ENCODE measurements at regions of chr20 and their contacts with region 1.

Region 1: DNA sequence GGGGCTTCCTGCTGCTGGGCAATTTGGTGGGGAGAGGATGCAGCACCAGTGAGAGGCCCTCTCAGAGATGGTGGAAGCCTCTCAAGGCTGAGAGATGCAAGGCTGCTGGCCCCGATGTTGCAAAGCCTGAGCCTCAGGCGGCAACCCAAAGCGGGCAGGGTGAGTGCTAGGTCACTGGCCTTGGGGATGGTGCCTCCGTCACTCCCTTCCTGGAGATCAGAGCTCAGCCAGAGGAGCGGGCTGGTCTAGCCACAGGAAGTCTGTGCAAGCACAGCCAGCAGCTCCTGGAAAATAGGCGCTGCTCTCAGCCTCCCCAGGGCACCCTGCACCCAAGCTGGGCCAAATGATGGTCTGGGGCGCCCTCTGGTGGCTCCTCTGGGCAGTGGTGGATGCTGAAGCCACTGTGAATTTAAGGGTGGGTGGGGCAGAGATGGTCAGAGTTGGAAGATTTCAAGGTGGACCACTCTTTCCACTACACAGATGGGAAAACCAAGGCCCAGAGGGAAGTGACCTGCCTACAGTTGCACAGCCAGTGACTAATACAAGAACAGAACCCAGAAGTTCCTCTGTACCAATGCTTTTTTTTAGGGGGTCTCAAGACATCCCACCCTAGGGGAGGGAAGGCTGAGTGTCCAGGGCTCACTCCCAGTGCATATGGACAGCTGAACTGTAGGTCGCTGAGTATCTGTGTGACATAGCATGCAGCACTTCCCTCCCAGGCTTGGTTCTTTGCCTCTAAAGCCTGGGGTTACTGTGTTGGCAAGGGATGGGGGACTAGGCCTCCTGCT is 20.8 kb downstream of the C20orf203 start:
- DNase-seq: peak; percentile 87 to 92 (median 89)
- ATAC-seq: peak; percentile 92
- H3K4me3 ChIP-seq: no peak overlapping the region
- H3K27ac ChIP-seq: no peak overlapping the region
- H3K4me1 ChIP-seq: peaks cover 34 to 41% of the 10 kb centered on the region in 2 experiments
- H3K27me3 ChIP-seq: no peaks in the 10 kb centered on the region
- CTCF ChIP-seq: peak; percentile 97 to 98 (median 97)
- EP300 ChIP-seq: peak; percentile 42; the same call in 1 of the 2 replicates
- POLR2A ChIP-seq: no peak
- RAD21 ChIP-seq: peak; percentile 99

Region 2: DNA sequence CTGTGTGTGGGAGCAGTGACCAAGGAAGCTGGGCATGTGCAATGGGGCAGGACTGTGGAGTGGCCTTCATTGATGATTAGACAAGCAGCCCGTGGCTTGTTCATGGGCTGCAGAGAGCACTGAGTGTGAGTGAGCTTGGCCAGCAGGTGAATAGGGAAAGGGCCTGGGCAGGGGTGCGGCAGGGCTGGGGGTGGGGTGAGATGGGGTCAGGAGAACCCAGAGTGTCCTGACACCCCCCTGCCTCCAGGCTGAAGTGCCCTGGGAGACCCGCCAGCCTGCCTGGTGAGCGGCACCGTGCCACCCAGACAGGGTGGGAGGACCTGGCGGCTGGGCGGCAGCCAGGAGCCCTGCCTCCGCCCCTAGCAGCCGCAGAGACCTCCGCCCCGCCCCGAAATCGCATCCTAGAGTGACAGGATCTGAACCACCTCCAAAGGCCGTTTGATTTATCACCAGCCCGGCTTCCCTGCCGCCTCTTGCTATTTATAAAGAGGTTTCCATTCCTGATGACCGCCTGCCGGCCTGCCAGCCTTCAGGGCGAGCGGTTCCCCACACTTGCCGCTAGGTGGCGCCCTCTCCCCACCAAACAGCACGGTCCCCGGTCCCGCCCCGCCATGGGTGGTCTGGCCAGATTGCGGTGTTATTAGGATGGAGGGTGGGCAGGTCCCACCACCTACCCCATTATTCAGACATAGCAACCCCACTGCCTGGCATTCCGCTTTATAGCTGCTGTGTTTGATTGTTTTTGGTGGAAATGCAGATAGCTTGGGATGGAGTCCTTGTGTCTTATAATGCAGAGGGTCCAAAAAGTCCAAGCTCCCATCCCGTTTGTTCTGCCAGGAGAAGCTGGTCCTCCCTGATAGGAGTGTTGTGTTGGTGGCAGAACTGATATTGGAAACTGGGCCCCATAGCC is 830.3 kb before region 1 on chr20:
- CTCF ChIA-PET with region 1: no interaction called
- POLR2A ChIA-PET with region 1: no interaction called
- in situ Hi-C with region 1: loop called (anchors 25 kb)
- intact Hi-C with region 1: loop called (anchors 10 kb)
- DNase-seq: peak; percentile 79 to 89 (median 86)
- ATAC-seq: peak; percentile 95
- H3K4me3 ChIP-seq: no peak overlapping the region
- H3K27ac ChIP-seq: no peak overlapping the region
- H3K4me1 ChIP-seq: peaks cover 0 to 10% of the 10 kb centered on the region in 2 experiments; a peak in 3 of 5 replicates
- H3K27me3 ChIP-seq: peaks cover 11 to 16% of the 10 kb centered on the region in 2 experiments; a peak in 3 of 5 replicates
- CTCF ChIP-seq: peak; percentile 90 to 95 (median 95)
- EP300 ChIP-seq: no peak
- POLR2A ChIP-seq: no peak
- RAD21 ChIP-seq: peak; percentile 95 to 96

Region 3: DNA sequence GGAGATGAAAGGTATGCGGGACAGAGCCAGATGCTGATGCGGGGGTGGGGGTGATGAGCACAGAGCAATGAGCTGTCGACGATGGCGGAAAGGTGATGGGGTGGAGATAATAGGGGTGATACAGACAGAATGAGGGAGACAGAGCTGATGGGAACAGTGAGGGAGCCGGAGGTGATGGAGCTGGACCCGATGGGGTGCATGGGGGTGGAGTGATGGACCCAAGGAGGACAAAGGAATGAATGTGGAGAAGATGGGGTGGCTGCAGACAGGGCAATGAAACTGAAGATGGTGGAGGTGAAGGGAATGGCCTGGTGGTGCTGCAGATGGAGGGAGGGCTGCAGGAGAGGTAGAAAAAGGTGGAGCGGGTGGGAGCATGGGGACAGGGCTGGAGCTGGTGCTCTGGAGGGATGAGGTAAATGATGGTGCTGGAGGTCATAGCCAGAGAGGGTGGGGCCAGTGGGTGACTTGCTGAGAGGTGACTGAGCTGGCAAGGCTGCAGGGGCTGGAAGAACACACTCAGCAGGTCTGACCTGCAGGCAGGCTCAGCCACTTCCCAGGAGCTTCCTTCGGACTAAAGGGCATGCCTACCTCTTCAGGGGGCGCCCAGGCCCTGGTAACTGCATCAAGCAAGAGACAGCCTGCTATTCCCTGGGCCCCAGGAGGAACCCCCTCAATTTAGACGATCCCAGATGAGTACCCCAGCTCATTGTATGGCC is 801.5 kb before region 1 on chr20:
- CTCF ChIA-PET with region 1: no interaction called
- POLR2A ChIA-PET with region 1: no interaction called
- in situ Hi-C with region 1: loop called (anchors 25 kb)
- intact Hi-C with region 1: loop called (anchors 5 kb)
- DNase-seq: no peak
- ATAC-seq: no peak
- H3K4me3 ChIP-seq: no peak overlapping the region
- H3K27ac ChIP-seq: no peak overlapping the region
- H3K4me1 ChIP-seq: peaks cover 0 to 18% of the 10 kb centered on the region in 2 experiments; a peak in 3 of 5 replicates
- H3K27me3 ChIP-seq: peaks cover 11 to 49% of the 10 kb centered on the region in 2 experiments
- CTCF ChIP-seq: no peak
- EP300 ChIP-seq: no peak
- POLR2A ChIP-seq: no peak
- RAD21 ChIP-seq: no peak

Region 4: DNA sequence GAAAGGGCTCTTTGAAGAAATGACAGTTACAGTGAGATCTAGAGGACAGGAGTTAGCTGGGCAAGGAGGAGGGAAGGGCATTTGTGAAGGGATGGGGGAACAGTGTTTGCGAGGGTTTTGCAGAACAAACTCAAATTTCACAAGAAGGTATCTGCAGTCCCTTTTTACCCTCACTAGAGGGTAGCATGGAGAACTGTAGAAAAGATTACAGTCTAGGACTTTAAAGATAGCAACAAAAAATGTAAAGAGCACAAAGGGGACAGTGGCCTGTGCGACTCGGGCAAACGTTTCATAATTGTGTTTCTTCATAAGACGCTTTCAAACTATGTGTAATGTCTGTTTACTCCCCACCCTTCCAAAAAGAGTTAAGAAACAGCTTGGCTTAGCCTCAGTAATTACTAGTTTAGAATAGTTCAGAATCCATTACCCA is 316.0 kb before region 1 on chr20:
- CTCF ChIA-PET with region 1: no interaction called
- POLR2A ChIA-PET with region 1: no interaction called
- in situ Hi-C with region 1: no loop called
- intact Hi-C with region 1: loop called (anchors 10 kb)
- DNase-seq: peak; percentile 38 to 62 (median 49)
- ATAC-seq: peak; percentile 58
- H3K4me3 ChIP-seq: no peak overlapping the region
- H3K27ac ChIP-seq: no peak overlapping the region
- H3K4me1 ChIP-seq: peaks cover 3 to 33% of the 10 kb centered on the region in 2 experiments
- H3K27me3 ChIP-seq: no peaks in the 10 kb centered on the region
- CTCF ChIP-seq: peak; percentile 50 to 71 (median 70); a peak in 5 of 6 replicates
- EP300 ChIP-seq: no peak
- POLR2A ChIP-seq: no peak
- RAD21 ChIP-seq: peak; percentile 54 to 70

Region 5: GRCh38 chr20:32516583-32517517 is 136.1 kb before region 1 on chr20:
- CTCF ChIA-PET with region 1: interaction called, 85 read pairs
- POLR2A ChIA-PET with region 1: interaction called, 5 read pairs
- in situ Hi-C with region 1: loop called (anchors 5 kb)
- intact Hi-C with region 1: loop called (anchors 1 kb)
- DNase-seq: no peak
- ATAC-seq: peak; percentile 7; the same call in 1 of the 3 replicates
- H3K4me3 ChIP-seq: no peak overlapping the region
- H3K27ac ChIP-seq: no peak overlapping the region
- H3K4me1 ChIP-seq: peaks cover 5 to 28% of the 10 kb centered on the region in 2 experiments
- H3K27me3 ChIP-seq: no peaks in the 10 kb centered on the region
- CTCF ChIP-seq: no peak
- EP300 ChIP-seq: no peak
- POLR2A ChIP-seq: no peak
- RAD21 ChIP-seq: no peak

Region 6: DNA sequence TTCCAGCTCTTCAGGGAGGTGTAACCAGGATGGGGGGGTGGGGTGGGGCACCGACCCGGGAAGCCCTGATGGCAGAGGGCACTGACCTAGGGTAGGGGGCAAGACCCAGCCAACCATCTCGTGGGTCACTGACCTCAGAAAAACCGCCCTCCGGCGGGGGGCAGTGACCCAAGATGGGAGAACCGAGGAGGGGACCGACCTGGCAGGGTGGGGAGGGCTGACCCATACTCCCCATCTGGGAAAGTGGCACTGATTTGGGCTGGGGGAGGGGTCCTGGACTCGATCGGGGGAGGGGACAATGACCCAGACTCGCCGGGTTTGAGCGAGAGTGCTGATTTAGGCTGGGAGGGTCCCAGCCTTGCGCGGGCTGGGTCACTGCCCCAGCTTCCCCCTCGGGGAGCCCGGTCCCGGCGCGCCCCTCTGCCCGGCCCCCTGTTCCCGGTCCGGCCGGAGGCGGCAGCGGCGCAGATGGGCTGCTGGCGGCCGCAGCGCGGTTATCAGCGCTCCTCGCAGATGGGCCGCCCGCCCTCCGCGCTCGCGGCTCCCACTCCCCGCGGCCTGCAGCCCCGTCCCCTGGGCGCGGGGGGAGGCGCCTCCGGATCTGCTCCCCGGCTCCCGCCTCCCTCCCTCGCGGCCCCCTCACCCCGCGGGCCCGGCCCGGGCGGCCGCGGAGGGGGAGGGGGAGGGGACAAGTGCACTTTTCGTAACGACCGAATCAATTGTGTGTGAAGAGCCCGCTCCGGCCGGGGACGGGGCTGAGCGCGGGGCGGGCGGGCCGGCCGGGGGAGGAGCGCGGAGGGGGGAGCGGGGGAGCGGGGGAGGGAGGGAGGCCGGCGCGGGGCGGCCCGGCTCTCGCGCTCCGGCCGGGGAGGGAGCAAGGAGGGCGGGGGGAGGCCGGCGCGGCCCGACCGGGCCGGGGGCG is 70.0 kb before region 1 on chr20:
- CTCF ChIA-PET with region 1: interaction called, 3 read pairs
- POLR2A ChIA-PET with region 1: interaction called, 3 read pairs
- in situ Hi-C with region 1: no loop called
- intact Hi-C with region 1: loop called (anchors 5 kb)
- DNase-seq: peak; percentile 70 to 83 (median 80)
- ATAC-seq: peak; percentile 31
- H3K4me3 ChIP-seq: peak overlapping the region; percentile 87
- H3K27ac ChIP-seq: peak overlapping the region; percentile 83
- H3K4me1 ChIP-seq: peaks cover 55 to 68% of the 10 kb centered on the region in 2 experiments
- H3K27me3 ChIP-seq: no peaks in the 10 kb centered on the region
- CTCF ChIP-seq: no peak
- EP300 ChIP-seq: no peak
- POLR2A ChIP-seq: no peak
- RAD21 ChIP-seq: peak in 1 of 2 experiments; percentile 17; a peak in 1 of 4 replicates